Endothelial cell of umbilical vein (primary cell): ENCODE measurements at regions of chr11 and their contacts with region 1.

Region 1: DNA sequence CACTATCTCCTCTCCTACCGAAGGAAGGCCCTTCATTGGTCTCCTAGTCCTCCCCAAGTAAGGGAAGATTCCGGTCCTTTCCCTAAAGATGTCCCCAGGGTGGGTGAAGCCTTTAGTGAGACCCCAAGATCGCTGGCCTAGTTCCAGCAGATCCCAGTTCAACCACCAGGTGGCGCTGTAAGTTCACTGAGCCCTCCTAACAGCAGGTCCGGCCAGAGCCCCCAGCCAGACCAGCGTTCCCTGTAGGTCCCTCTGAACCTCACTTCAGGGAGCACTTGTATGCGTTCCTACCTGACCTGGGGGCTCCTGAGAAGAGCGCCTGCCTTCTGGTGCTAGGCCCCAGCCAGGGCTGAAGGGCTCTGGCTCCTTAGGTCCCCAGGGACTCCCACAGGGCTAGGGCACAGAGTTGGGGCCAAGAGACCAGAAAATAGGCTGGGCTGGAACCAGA is 38.1 kb downstream of the LMO1 start:
- DNase-seq: peak; percentile 68
- H3K4me3 ChIP-seq: no peak overlapping the region
- H3K27ac ChIP-seq: no peak overlapping the region
- H3K4me1 ChIP-seq: no peaks in the 10 kb centered on the region
- H3K27me3 ChIP-seq: peaks cover 0 to 3% of the 10 kb centered on the region in 2 experiments
- CTCF ChIP-seq: peak; percentile 84 to 90
- POLR2A ChIP-seq: no peak

Region 2: GRCh38 chr11:8318336-8318935 is 92.8 kb after region 1 on chr11:
- CTCF ChIA-PET with region 1: no interaction called
- POLR2A ChIA-PET with region 1: no interaction called
- dilution Hi-C with region 1: no loop called
- intact Hi-C with region 1: loop called (anchors 5 kb)
- DNase-seq: no peak
- H3K4me3 ChIP-seq: no peak overlapping the region
- H3K27ac ChIP-seq: no peak overlapping the region
- H3K4me1 ChIP-seq: no peaks in the 10 kb centered on the region
- H3K27me3 ChIP-seq: no peaks in the 10 kb centered on the region
- CTCF ChIP-seq: peak; percentile 17 to 42
- POLR2A ChIP-seq: no peak